ENCODE measurements at regions of chr12 and their contacts with region 1.

Region 1: DNA sequence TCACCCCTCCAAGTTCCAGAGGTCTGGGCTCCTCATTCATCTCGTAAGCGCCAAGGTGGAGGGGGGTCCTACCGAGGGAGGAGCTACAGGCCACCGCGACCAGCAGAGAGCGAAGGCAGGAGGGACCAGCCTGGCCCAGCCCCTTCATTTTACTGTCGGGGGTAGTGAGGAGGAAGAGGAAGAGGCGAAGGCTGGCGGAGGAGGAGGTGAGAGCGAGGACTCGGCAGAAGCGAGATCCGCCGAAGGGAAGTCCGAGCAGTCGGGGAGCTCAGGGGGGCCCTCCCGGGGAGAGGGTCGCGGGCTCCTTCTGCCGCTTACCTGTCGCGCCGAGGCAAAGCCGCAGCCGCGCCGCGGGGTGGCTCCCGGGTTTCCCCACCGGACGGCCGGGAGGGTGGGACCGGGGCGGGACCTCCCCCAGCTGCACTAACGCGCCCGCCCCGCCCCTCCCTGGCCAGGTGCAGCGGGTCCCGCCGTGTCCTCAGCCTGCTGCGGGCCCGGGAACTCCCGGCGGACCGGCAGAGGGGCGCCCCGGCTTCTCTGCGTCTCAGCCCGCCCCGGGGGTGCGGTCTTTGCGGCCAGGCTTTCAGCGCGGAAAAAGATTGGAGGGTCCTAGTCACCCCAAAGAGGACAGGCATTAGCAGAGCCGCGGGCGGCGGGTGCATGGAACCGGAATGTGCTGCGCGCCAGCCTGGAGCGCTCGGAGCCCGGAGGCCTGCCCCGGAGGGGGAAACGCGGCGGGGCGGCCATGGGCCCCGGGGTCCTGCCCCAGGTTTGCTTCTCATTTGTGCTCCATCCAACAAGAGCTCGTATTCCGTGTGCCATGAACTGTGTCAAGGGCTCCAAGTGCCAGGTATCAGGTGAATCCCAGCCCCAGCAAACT is at the start of gene GALNT6:
- DNase-seq: peak; percentile 80
- ATAC-seq: peak; percentile 75
- H3K4me3 Mint-ChIP-seq: peak within 1 kb of the TSS; percentile 94
- H3K27ac Mint-ChIP-seq: peak within 1 kb of the TSS; percentile 85
- H3K4me1 Mint-ChIP-seq: peaks cover 79% of the 10 kb centered on the region
- H3K27me3 Mint-ChIP-seq: no peaks in the 10 kb centered on the region
- CTCF ChIP-seq: no peak
- total RNA-seq, gene GALNT6: 23.8 and 24.4 TPM in 2 replicates

Region 2: DNA sequence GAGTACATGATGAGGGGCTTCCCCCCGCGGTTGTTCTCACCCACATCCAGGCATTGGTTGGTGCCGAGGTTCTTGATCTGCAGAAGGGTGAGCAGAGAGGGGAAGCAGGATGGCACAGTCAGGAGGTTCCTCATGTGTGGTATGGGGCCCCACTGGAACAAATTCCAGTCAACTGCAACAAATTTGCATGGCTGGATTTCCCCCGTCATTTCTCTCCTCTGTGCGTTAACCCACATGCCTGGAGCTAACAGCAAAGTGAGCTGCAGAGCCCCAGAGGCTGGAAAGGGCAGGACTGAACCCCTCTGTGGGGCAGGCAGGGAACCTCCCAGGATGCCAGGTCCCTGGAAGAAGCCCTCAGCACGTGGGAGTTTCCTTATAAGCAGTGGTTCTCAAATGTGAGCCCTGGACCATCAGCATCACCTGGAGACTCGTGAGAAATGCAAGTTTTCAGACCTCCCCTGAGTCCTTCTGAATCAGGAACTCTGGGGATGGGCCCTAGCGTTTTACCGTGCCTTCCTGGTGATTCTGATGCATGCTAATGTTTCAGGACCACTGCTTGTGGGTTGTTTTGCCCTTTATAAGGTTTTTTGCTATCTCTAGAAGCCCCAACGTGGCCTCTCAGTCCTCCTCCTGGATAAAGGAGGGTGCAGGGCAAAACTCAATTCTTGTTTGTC is 34.0 kb before region 1 on chr12:
- CTCF ChIA-PET with region 1: interaction called, 3 read pairs
- POLR2A ChIA-PET with region 1: interaction called, 16 read pairs
- intact Hi-C with region 1: loop called (anchors 1 kb)
- DNase-seq: peak; percentile 58
- ATAC-seq: peak; percentile 90
- H3K4me3 Mint-ChIP-seq: peak overlapping the region; percentile 65
- H3K27ac Mint-ChIP-seq: peak overlapping the region; percentile 42
- H3K4me1 Mint-ChIP-seq: peaks cover 38% of the 10 kb centered on the region
- H3K27me3 Mint-ChIP-seq: no peaks in the 10 kb centered on the region
- CTCF ChIP-seq: no peak

Region 3: GRCh38 chr12:51590347-51591019 is 199.0 kb after region 1 on chr12:
- CTCF ChIA-PET with region 1: no interaction called
- POLR2A ChIA-PET with region 1: interaction called, 3 read pairs
- intact Hi-C with region 1: loop called (anchors 1 kb)
- DNase-seq: peak; percentile 75
- ATAC-seq: peak; percentile 88
- H3K4me3 Mint-ChIP-seq: peak overlapping the region; percentile 88
- H3K27ac Mint-ChIP-seq: peak overlapping the region; percentile 56
- H3K4me1 Mint-ChIP-seq: peaks cover 18% of the 10 kb centered on the region
- H3K27me3 Mint-ChIP-seq: peaks cover 32% of the 10 kb centered on the region
- CTCF ChIP-seq: no peak

Region 4: DNA sequence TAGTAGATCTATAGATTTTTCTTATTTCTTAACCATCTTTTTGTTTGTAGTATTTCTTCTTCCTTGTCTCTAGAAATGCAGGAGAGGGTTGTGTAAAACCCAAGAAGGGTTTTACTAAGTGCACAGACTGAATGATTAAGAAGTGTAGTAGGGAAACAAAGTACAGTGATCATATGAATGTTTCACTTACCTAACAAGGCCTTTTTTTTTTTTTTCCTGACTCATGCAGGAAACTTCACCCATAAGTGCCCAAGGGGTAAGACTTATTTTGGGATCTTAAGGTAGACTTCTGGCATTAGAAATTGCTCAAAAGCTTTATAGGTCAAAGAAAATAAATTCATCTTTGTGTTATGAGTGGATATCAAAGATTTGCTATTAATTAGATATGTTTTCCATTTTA is 209.7 kb after region 1 on chr12:
- CTCF ChIA-PET with region 1: no interaction called
- POLR2A ChIA-PET with region 1: no interaction called
- intact Hi-C with region 1: no loop called
- DNase-seq: no peak
- ATAC-seq: no peak
- H3K4me3 Mint-ChIP-seq: no peak overlapping the region
- H3K27ac Mint-ChIP-seq: no peak overlapping the region
- H3K4me1 Mint-ChIP-seq: no peaks in the 10 kb centered on the region
- H3K27me3 Mint-ChIP-seq: peaks cover 32% of the 10 kb centered on the region
- CTCF ChIP-seq: no peak